Mucosa of descending colon (tissue), 3 donors: ENCODE measurements at regions of chr3 and their contacts with region 1.

Region 1: GRCh38 chr3:115512565-115513415 is 110.5 kb upstream of the GAP43 start:
- DNase-seq: peak in 1 of 3 donors; percentile 3
- ATAC-seq: peak; percentile 32
- H3K4me3 ChIP-seq: no peak overlapping the region
- H3K4me1 ChIP-seq: no peaks in the 10 kb centered on the region
- CTCF ChIP-seq: no peak

Region 2: DNA sequence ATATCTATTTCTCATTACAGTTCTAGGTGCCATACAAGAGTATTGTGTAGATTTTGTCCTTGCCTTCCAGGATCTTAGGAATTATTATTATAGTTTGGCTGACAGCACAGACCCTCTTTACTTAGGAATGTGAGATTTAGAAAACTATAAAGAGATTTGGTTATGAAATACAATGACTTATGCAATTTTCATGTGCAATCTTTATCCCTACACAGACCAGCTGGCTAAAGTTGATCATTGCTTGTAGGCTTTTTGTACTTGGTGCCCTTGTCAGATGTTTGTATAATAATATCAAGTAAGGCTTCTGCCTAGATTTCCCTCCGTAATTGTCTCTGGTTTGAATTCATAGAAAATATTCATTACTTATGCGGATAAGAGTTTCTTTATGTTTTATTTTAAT is 63.9 kb before region 1 on chr3:
- intact Hi-C with region 1: no loop called
- DNase-seq: no peak
- ATAC-seq: no peak
- H3K4me3 ChIP-seq: no peak overlapping the region
- H3K4me1 ChIP-seq: no peaks in the 10 kb centered on the region
- CTCF ChIP-seq: no peak

Region 3: DNA sequence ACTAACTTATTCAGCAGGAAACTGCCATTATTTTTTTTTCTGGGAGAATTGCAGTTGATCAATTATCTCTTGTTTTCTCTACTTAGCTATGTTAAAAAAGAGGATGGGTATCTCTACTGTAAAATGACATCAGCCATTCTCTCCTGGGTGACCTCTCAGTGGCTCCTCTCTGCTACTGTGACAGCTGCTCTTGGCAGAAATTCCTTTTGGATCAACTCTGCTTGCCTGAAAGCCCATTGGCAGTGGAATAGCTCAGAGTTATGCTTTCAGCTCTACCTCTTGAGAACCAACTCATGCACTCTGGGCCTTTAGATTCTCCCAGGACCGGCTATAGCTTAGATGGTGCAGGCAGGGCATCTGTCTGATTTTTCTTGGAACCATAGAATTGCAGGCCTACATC is 10.7 kb after region 1 on chr3:
- intact Hi-C with region 1: loop called in 1 of 2 experiments (anchors 2 kb)
- DNase-seq: no peak
- ATAC-seq: no peak
- H3K4me3 ChIP-seq: no peak overlapping the region
- H3K4me1 ChIP-seq: no peaks in the 10 kb centered on the region
- CTCF ChIP-seq: no peak